Gastrocnemius medialis (tissue), 4 donors: ENCODE measurements at regions of chr9 and their contacts with region 1.

Region 1: DNA sequence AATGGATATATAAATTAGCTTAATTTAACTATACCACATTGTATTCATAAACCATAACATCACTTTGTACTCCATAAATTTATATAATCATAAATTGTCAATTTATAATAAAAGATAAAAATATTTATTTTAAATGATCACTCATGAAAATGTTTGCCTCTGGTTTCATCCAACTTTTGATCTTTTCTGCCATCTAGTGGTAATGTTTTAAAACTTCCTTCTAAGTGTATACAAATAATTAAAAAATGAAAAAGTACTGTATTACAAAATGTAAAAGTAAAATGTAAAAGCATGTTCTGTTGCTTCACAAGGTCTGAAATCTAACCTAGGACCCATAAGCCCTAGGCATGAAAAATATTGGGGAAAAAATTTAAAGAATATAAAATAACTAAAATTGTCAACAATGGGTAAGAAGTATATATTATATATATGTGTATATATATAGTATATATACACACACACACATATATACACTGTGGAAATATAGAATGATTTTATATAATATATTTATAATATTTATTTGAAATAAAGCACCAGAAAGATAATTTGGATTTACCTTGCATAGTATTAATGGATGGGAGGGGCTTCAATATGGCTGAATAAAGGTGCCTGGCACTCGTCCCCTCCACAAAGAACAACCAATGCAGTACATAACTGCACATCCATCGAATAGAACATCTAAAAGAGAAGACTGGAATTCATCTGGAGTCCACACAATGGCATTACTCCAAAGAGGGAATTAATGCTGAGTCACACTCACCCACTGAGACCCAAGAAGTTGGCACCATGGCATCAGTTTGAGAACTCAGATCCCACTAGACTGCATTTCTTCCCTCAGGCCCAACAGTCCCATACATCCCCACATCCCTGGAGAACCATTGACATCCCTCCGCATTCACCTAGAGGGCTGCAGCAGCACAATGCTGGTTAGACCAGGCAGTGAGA is 32.5 kb downstream of the ANXA1 start:
- DNase-seq: no peak
- ATAC-seq: peak in 1 of 2 donors; percentile 33
- H3K4me3 ChIP-seq: no peak overlapping the region
- H3K27ac ChIP-seq: no peak overlapping the region
- H3K4me1 ChIP-seq: no peaks in the 10 kb centered on the region
- H3K27me3 ChIP-seq: no peaks in the 10 kb centered on the region
- CTCF ChIP-seq: peak; percentile 41 to 67 (median 54)
- POLR2A ChIP-seq: no peak

Region 2: GRCh38 chr9:73104342-73104741 is 79.8 kb before region 1 on chr9:
- in situ Hi-C with region 1: loop called (anchors 5 kb)
- intact Hi-C with region 1: loop called (anchors 2 kb)
- DNase-seq: no peak
- ATAC-seq: no peak
- H3K4me3 ChIP-seq: no peak overlapping the region
- H3K27ac ChIP-seq: no peak overlapping the region
- H3K4me1 ChIP-seq: no peaks in the 10 kb centered on the region
- H3K27me3 ChIP-seq: no peaks in the 10 kb centered on the region
- CTCF ChIP-seq: no peak
- POLR2A ChIP-seq: no peak

Region 3: GRCh38 chr9:73216100-73216499 is 31.9 kb after region 1 on chr9:
- in situ Hi-C with region 1: no loop called
- intact Hi-C with region 1: no loop called
- DNase-seq: no peak
- ATAC-seq: no peak
- H3K4me3 ChIP-seq: no peak overlapping the region
- H3K27ac ChIP-seq: no peak overlapping the region
- H3K4me1 ChIP-seq: no peaks in the 10 kb centered on the region
- H3K27me3 ChIP-seq: no peaks in the 10 kb centered on the region
- CTCF ChIP-seq: no peak
- POLR2A ChIP-seq: no peak

Region 4: GRCh38 chr9:73239570-73240267 is 55.5 kb after region 1 on chr9:
- in situ Hi-C with region 1: no loop called
- intact Hi-C with region 1: no loop called
- DNase-seq: no peak
- ATAC-seq: no peak
- H3K4me3 ChIP-seq: no peak overlapping the region
- H3K27ac ChIP-seq: no peak overlapping the region
- H3K4me1 ChIP-seq: no peaks in the 10 kb centered on the region
- H3K27me3 ChIP-seq: no peaks in the 10 kb centered on the region
- CTCF ChIP-seq: no peak
- POLR2A ChIP-seq: no peak